H1 (cell line): ENCODE measurements at regions of chr3 and their contacts with region 1.

Region 1: GRCh38 chr3:150603153-150603979 is at the start of gene SELENOT:
- DNase-seq: peak; percentile 92 to 96
- H3K4me3 ChIP-seq: peak within 1 kb of the TSS; percentile 76 to 92 (median 85)
- H3K27ac ChIP-seq: peak within 1 kb of the TSS; percentile 89
- H3K4me1 ChIP-seq: peaks cover 6 to 24% (median 17%) of the 10 kb centered on the region in 4 experiments; a peak in 6 of 7 replicates
- H3K27me3 ChIP-seq: no peaks in the 10 kb centered on the region
- CTCF ChIP-seq: 0 out of 4 replicates have a peak, but pooled peaks of 1 of the 3 experiments have one; percentile 5
- EP300 ChIP-seq: no peak
- POLR2A ChIP-seq: peak; percentile 98 to 99
- RAD21 ChIP-seq: no peak; a peak in 1 of 4 replicates
- total RNA-seq, gene SELENOT: 74.7 and 79.0 TPM in 2 replicates

Region 2: DNA sequence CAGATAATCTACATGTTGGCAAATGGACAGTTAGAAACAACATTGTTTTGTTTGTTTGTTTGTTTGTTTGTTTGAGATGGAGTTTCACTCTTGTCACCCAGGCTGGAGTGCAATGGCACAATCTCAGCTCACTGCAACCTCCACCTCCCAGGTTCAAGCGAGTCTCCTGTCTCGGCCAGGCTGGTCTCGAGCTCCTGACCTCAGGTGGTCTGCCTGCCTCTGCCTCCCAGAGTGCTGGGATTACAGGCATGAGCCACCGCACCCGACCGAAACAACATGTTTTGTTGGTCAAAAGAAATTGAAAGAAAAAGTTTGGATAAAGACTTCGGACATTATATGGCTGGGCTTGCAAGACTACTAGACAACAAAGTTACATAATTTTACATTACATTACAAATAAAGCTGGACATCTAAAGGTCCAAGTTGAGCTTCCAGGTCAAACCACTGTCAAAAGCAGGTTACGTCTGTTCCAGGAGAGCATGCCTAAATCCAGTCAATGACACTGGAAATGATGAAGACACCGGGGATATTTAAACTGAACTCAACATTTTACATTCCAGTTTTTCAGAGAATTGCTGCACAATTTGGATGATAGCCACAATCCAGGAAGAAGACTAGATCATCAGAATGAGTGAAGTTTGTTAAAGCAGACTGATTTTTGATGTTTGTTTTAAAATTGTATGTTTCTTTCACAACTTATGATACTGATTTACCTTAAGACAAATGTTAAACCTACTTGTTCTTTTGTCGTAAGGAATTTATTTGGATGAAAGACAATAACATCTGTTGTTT is 75.7 kb before region 1 on chr3:
- CTCF ChIA-PET with region 1: no interaction called
- POLR2A ChIA-PET with region 1: no interaction called
- DNase-seq: no peak
- H3K4me3 ChIP-seq: peak overlapping the region in 1 of 4 experiments; percentile 19; a peak in 1 of 8 replicates
- H3K27ac ChIP-seq: no peak overlapping the region
- H3K4me1 ChIP-seq: peaks cover 0 to 4% (median 0%) of the 10 kb centered on the region in 4 experiments; a peak in 3 of 7 replicates
- H3K27me3 ChIP-seq: no peaks in the 10 kb centered on the region
- CTCF ChIP-seq: no peak
- EP300 ChIP-seq: no peak
- POLR2A ChIP-seq: no peak
- RAD21 ChIP-seq: no peak

Region 3: DNA sequence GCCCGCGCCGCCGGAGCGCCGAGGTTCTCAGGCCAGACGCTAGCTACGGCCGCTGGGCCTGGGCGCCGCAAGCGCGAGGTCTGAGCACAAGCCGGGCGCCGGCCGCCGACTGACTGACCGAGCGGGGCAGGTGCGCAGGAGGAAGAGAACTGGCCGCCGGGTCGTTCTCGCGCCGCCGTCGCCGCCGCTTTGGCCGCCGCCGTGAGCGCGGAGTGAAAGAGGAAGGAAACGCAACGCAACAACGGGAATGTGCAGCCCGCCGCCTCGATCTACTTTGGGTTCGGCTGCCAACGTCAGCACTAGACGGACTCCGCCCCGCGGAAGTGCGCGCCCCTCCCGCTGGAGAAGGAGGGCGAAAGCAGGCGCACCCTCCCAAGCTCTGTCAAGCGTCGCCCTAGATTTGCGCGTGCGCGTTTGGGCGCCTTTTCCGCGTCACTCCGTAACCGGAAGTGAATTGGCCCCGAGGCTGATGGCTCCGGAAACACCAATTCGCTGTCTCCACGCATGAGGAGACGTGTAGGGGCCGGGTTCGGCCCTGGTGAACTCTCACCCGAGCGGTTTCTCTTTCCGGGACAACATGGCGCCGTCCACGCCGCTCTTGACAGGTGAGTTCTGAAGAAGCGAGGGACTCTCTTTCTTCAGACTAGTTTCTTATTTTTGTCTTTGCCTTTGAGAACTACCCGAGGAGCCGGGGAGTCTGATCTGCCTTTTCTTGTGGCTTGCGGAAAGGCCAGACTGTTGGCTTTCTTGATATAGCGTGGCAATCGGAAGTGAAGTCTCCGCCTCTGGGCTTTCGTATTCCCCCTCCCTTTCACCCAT is 56.9 kb before region 1 on chr3 and contains the starts of genes EIF2A and SERP1:
- CTCF ChIA-PET with region 1: no interaction called
- POLR2A ChIA-PET with region 1: interaction called, 11 read pairs
- DNase-seq: peak; percentile 96 to 99
- H3K4me3 ChIP-seq: peak within 1 kb of the TSS; percentile 77 to 98 (median 88)
- H3K27ac ChIP-seq: peak within 1 kb of the TSS; percentile 93
- H3K4me1 ChIP-seq: no peaks in the 10 kb centered on the region; a peak in 2 of 7 replicates
- H3K27me3 ChIP-seq: no peaks in the 10 kb centered on the region
- CTCF ChIP-seq: 0 out of 4 replicates have a peak, but pooled peaks of 1 of the 3 experiments have one; percentile 1
- EP300 ChIP-seq: no peak
- POLR2A ChIP-seq: peak; percentile 77 to 94
- RAD21 ChIP-seq: no peak
- total RNA-seq, gene EIF2A: 87.5 and 91.6 TPM in 2 replicates
- total RNA-seq, gene SERP1: 98.2 and 111 TPM in 2 replicates

Region 4: DNA sequence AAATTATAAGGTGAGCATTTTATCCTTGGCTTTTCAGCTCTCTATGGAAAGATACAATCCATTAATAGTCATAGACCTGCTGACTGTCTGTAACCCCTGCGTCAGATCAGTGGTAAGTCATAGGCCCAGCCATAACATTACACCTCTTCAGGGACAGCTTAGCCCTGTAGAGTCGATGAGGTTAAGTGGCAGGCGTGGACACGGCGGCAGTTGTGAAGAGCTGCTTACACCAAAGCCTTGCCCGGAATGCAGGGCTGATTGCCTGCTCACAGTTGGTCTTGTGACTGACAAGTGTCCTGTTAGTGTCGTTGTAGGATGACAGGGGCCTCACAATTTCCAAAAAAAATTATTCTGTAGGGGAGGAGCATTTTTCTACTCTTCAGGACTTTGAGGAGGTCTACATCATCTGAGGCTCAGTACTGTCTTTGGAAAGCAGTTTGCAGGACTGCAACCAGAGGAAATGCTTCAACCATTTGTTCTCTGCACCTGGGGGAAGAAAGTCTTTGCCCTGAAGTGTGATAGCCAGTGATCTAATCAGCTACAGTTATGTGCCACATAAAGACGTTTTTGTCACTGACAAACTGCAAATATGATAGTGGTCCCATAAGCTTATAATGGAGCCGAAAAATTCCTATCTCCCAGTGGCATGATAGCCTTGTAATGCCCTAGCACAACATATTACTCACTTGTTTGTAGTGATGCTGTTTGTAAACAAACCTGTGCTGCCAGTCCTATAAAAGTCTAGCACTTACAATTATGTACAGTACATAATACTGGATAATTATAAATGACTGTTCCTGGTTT is 15.1 kb before region 1 on chr3:
- CTCF ChIA-PET with region 1: interaction called, 6 read pairs
- POLR2A ChIA-PET with region 1: interaction called, 18 read pairs
- DNase-seq: no peak
- H3K4me3 ChIP-seq: no peak overlapping the region
- H3K27ac ChIP-seq: peak overlapping the region; percentile 38; the same call in 1 of the 2 replicates
- H3K4me1 ChIP-seq: no peaks in the 10 kb centered on the region
- H3K27me3 ChIP-seq: no peaks in the 10 kb centered on the region
- CTCF ChIP-seq: no peak
- EP300 ChIP-seq: no peak
- POLR2A ChIP-seq: no peak
- RAD21 ChIP-seq: no peak

Region 5: GRCh38 chr3:150798122-150798626 is 194.8 kb after region 1 on chr3:
- CTCF ChIA-PET with region 1: no interaction called
- POLR2A ChIA-PET with region 1: no interaction called
- DNase-seq: no peak
- H3K4me3 ChIP-seq: peak overlapping the region in 1 of 4 experiments; percentile 9; a peak in 1 of 8 replicates
- H3K27ac ChIP-seq: no peak overlapping the region; the same call in 1 of the 2 replicates
- H3K4me1 ChIP-seq: peaks cover 0 to 5% (median 0%) of the 10 kb centered on the region in 4 experiments; a peak in 1 of 7 replicates
- H3K27me3 ChIP-seq: no peaks in the 10 kb centered on the region
- CTCF ChIP-seq: no peak
- EP300 ChIP-seq: no peak
- POLR2A ChIP-seq: no peak
- RAD21 ChIP-seq: no peak